PC-3 (cell line): ENCODE measurements at regions of chr11 and their contacts with region 1.

Region 1: DNA sequence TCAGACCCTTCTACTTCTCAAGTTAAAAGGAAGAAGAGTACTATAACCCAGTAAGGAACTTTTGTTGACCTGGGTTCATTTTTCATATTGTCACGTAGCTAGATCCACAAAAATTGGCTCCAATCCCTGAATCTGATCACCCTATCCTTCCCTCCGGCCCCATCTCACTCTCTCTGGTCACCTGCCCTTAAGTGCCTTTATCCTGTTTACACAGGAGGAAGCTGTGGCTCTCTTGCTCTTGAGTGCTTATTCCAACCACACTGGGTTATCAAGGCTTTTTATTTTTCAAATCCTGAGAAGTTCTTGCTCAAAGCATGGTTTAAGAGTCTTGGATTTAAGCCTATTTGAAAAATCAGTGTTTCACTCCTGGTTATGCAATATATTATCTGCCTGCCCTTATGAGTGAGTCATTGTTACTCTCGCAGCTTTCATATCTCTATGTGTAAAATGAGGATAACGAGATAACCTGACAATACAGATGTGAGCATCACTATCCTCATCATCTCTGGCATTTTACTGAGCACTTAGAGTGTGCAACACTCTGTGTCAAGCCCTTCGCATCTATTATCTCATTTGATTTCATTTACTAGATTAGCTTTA is 293.9 kb downstream of the GUCY1A2 start:
- DNase-seq: no peak
- ATAC-seq: no peak
- H3K4me3 ChIP-seq: no peak overlapping the region
- H3K27ac ChIP-seq: no peak overlapping the region
- H3K4me1 ChIP-seq: no peaks in the 10 kb centered on the region
- H3K27me3 ChIP-seq: no peaks in the 10 kb centered on the region
- CTCF ChIP-seq: no peak

Region 2: GRCh38 chr11:106691807-106692365 is 32.5 kb before region 1 on chr11:
- CTCF ChIA-PET with region 1: no interaction called
- POLR2A ChIA-PET with region 1: no interaction called
- intact Hi-C with region 1: no loop called
- DNase-seq: peak; percentile 50
- ATAC-seq: peak; percentile 49
- H3K4me3 ChIP-seq: no peak overlapping the region
- H3K27ac ChIP-seq: no peak overlapping the region
- H3K4me1 ChIP-seq: peaks cover 12% of the 10 kb centered on the region
- H3K27me3 ChIP-seq: no peaks in the 10 kb centered on the region
- CTCF ChIP-seq: no peak

Region 3: DNA sequence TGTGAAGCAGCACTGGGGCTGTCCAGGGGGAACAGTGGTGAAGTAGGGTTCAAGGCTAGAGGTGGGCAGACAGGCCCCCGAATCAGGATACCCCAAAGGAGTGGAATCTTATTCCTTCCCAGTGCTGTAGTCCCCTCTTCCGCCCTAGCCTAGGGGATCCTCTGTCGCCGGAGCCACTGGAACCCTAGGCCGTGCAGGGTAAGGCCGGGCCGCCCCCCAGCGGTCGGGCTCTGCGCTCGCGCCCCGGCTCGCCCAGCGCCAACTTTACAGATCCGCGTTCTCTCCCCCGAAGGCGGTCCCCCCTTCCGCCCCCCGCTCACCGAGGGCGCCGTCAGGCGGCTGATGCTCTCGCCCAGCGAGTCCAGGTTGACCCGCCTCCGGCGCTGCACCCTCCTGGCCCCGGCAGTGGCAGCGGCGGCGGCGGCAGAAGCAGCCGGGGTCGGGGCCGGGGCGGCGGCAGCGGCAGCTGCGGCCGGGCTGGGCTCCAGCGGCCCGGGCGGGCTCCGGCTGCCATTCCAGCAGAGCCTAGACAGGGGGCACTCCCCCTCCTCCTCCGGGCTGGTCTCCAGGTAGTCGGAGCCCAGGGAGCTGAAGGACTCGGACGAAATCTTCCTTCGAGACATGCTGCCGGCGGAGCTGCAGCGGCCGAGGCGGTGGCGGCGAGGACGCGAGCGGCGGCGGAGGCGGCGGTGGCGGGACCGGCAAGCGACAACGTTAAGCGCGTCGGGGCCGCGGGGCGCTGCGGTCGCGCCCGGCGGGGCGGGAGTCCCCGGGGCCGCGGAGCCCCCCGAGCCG is 293.2 kb after region 1 on chr11:
- CTCF ChIA-PET with region 1: no interaction called
- POLR2A ChIA-PET with region 1: no interaction called
- intact Hi-C with region 1: loop called (anchors 5 kb)
- DNase-seq: peak; percentile 21
- ATAC-seq: peak; percentile 63
- H3K4me3 ChIP-seq: peak overlapping the region; percentile 57
- H3K27ac ChIP-seq: no peak overlapping the region
- H3K4me1 ChIP-seq: peaks cover 17% of the 10 kb centered on the region; the same call in 1 of the 2 replicates
- H3K27me3 ChIP-seq: peaks cover 61% of the 10 kb centered on the region
- CTCF ChIP-seq: peak; percentile 65

Region 4: DNA sequence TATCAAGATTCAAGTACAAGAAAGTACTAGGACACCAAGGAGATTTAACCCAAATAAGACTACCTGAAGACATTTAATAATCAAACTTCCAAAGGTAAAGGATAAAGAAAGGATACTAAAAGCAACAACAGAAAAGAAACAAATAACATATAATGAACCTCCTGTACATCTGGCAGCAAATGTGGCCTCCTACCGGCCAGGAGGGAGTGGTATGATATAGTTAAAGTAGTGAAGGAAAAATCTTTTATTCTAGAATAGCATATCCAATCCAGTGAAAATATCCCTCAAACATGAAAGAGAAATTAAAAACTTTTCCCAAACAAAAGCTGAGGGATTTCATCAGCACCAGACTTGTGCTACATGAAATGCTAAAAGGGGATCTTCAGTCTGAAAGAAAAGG is 398.6 kb after region 1 on chr11:
- CTCF ChIA-PET with region 1: no interaction called
- POLR2A ChIA-PET with region 1: no interaction called
- intact Hi-C with region 1: loop called (anchors 10 kb)
- DNase-seq: peak; percentile 33
- ATAC-seq: peak; percentile 60
- H3K4me3 ChIP-seq: no peak overlapping the region
- H3K27ac ChIP-seq: no peak overlapping the region
- H3K4me1 ChIP-seq: no peaks in the 10 kb centered on the region
- H3K27me3 ChIP-seq: no peaks in the 10 kb centered on the region
- CTCF ChIP-seq: peak; percentile 66